Cardiac septum (tissue), 1 donor: ENCODE measurements at regions of chr20 and their contacts with region 1.

Region 1: GRCh38 chr20:6767536-6768227 is at the start of gene BMP2:
- DNase-seq: peak; percentile 77
- total RNA-seq, gene BMP2: 3.0 TPM

Region 2: DNA sequence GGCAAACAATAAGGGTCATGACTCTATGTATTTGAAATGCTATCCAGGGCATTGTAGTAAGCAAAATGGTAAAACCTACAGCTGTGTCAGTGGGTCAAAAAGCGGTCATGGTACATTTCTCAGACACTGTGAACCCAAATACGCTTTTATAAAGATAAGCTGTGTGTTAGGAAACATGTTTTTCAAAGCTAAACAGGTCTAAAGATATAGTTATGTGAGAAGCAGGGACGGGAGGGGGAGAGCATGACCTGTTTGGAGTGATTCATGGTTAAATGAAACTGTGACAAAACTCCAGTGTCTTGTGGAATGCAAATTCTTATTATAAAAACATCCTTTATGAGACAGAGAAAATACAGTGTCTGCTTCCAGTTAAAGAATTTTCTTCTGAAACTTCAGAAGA is 205.6 kb before region 1 on chr20:
- intact Hi-C with region 1: no loop called
- DNase-seq: no peak

Region 3: DNA sequence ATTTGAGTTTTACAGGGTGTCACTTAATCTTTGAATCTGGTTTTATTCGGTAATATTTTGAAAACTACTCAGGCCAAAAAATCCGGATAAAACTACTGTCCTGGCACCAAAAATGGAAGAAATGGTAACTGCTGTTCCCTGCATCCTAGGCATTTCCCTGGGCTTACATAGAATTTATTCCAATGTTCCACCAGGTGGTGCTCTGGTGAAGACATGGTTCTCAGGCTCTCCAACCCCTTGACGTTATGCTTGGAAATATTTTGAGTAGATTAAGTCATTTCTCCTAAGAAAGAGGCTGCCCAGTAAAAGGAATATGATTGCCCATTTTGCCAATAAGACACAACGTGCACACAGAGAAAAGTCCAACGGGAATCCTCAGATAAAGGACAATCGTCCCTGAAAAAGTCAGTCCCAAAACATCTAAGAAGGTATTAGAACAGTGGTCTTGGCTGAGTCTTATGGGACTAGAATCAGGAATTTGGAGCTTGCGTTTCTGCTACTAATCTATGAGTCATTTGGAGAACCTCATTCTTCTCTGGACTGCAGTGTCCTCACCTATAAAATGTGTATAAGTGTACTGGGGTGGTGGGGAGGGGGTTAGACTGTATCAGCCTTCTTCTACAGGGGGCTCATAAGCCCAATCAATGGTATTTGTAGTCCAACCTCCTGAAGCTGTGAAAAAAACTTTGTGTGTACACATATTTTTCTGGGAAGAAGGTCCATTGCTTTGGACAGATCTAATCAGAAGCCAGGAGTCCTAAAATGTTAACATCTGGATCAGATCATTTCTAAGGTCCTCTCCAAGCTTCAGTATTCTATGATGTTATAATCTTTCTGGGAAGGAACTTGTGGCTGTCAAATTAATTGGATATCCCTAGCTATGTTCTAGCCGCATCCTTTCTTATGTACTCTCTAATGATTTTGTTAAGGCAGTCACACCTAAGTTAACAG is 131.2 kb before region 1 on chr20:
- intact Hi-C with region 1: loop called (anchors 5 kb)
- DNase-seq: no peak